BJ (cell line): ENCODE measurements at regions of chr17 and their contacts with region 1.

Region 1: DNA sequence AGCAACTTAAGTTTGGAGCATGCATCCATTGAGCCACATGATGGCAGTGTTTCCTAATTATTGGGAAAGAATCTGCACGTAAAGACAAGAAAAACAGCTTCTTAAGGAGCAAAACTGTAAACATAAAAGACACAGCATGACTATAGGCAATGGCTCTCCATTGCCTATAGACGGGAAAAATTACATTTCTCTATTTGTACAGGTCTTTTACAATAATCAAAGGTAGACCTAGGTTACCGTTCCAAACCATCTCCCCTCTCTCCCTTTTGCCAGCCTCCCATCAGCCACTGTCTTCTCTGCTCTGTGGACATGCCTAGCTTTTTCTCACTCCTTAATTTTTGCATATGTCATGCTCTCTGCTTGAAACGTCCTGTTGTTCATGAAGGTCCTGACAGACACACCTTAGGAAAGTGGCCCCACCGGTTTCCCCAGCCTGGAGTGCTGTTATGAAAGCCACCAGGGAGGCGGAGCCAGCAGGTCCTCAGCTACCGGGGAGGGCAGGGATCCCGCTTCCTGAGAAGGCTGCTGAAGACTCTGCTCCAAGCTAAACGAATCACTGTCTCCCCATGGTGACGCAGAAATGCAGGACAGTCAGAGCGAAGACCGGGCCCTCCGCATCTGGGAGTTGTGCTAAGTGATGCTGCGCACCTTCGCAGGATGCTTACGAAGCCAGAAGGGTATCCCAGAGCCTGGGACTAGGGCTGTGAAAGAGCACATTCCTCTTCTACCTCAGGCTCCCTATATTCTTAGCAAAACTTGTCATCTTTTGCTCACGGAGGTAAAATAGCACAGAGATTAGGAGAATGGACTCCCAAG is 2.2 kb upstream of the SLC16A11 start:
- DNase-seq: peak; percentile 35
- H3K4me3 ChIP-seq: no peak overlapping the region
- H3K27me3 ChIP-seq: peaks cover 16% of the 10 kb centered on the region
- CTCF ChIP-seq: peak; percentile 68

Region 2: DNA sequence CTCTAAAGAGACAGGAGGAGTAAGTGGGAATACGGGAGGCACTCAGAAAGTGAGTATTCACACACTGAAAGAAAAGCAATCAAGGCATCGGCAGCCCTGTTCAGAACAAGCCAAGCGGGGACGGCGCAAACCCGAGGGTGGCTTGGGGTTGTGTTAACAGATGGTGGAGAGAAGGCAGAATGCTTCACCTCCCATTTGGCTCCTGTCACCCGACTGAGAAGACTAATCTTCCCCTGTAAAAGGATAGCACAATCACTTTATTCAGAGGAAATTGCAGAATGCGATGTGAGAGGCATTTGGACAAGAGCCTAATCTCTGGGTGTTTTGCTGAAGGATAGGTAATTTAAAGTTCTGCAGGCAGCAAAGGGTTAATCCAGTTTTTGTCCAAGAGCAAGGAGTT is 1095.2 kb before region 1 on chr17:
- CTCF ChIA-PET with region 1: no interaction called
- POLR2A ChIA-PET with region 1: no interaction called
- DNase-seq: no peak
- H3K4me3 ChIP-seq: no peak overlapping the region
- H3K27me3 ChIP-seq: no peaks in the 10 kb centered on the region
- CTCF ChIP-seq: no peak

Region 3: DNA sequence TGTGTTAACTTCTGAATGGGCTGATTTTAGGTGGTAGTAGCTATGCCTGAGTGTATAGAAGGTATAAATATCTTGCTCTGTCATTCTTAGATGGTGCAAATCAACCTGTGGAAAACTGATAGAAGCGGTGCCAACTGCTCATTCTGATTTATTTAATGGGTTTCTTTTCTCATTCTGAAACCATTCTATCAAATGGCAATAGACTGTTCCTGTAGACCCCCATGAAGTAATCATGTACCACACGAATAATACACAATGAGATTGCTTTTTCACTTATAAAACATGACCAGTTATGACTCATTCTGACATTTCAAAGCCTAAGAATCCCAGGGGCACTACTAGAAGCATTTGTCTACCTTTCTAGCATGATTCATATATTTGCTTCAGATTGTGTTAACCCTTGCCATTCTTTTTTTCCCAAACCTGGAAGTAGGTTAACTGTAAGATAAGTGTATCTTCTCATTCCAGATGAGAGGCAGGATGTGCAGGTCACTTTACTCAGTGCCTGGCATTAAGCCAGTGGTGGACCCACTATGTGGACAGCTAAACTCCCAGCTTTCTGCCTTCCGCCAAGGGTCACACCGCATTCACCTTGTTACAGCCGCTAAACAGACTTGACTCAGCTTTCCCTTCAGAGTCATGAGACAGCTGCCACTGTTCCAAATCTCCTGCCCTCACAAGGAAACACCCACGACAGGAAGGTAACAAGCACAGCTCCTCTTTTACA is 14.2 kb after region 1 on chr17:
- CTCF ChIA-PET with region 1: interaction called, 12 read pairs
- POLR2A ChIA-PET with region 1: no interaction called
- DNase-seq: no peak
- H3K4me3 ChIP-seq: no peak overlapping the region
- H3K27me3 ChIP-seq: peaks cover 4% of the 10 kb centered on the region; the same call in 1 of the 2 replicates
- CTCF ChIP-seq: no peak

Region 4: GRCh38 chr17:7141824-7142223 is 95.7 kb after region 1 on chr17:
- CTCF ChIA-PET with region 1: interaction called, 92 read pairs
- POLR2A ChIA-PET with region 1: no interaction called
- DNase-seq: no peak
- H3K4me3 ChIP-seq: no peak overlapping the region
- H3K27me3 ChIP-seq: peaks cover 13% of the 10 kb centered on the region
- CTCF ChIP-seq: no peak

Region 5: DNA sequence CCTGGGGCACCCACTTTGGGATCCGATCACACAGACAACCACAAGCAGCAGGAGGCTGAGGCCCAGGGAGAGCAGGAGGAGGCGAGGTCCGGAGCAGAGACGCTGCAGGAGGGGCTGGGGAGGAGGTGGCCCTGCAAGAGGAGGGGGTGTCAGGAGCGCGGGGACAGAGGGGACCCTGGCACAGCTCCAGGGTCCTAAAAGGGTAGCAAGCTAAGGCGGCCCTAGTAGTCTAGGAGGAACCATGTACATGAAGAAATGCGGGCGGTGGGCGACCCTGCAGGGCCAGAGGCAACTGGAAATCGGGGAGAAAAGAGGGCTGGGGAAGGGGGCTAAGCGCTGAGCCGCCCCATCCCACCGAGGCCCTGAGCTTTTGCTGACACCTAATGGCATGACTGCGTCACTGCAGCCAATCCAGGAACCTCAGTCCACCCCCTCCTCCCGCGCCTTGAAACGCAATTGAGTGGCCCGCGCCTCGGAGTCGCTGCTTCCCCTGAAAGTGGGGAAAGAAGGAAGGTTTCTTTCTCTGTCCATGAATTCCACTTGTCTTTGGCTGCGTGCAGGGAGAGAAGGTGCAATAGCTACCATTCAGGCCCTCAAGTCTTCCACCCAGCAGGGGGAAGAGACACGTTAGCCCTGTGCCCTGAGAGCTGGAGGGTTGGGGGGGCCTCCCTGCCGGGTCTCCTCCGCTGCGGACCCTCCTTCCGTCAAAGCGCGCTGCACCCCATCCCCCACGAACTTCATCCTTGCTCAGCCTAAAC is 131.3 kb after region 1 on chr17:
- CTCF ChIA-PET with region 1: interaction called, 39 read pairs
- POLR2A ChIA-PET with region 1: no interaction called
- DNase-seq: no peak
- H3K4me3 ChIP-seq: peak overlapping the region; percentile 54
- H3K27me3 ChIP-seq: no peaks in the 10 kb centered on the region
- CTCF ChIP-seq: peak; percentile 84

Region 6: GRCh38 chr17:7296189-7296902 is 250.2 kb after region 1 on chr17:
- CTCF ChIA-PET with region 1: interaction called, 44 read pairs
- POLR2A ChIA-PET with region 1: no interaction called
- DNase-seq: no peak
- H3K4me3 ChIP-seq: peak overlapping the region; percentile 16; the same call in 1 of the 2 replicates
- H3K27me3 ChIP-seq: peaks cover 21% of the 10 kb centered on the region
- CTCF ChIP-seq: peak; percentile 75